ENCODE measurements at regions of chr6 and their contacts with region 1.

Region 1: DNA sequence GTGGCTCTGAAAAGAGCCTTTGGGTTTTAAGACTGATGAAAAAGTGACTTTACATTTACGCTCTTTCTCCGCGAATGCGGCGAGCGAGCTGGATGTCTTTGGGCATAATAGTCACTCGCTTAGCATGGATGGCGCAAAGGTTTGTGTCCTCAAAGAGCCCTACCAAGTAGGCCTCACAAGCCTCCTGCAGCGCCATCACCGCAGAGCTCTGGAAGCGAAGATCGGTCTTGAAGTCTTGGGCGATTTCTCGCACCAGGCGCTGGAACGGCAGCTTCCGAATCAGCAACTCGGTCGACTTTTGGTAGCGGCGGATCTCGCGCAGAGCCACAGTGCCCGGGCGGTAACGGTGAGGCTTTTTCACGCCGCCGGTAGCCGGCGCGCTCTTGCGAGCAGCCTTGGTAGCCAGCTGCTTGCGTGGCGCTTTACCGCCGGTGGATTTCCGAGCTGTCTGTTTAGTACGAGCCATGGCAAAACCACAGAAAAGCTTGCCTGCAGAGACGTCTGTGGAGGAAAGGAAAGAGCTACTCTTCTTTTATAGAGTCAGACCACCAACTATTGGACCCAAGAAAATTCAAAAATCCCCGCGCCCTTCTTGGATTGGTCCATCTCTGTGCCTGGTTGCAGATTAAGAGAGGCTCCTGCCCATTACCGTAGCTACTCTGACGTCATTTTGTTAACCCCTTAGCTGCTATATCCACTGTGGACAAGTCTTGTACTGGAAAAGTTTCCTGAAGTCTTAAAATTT is 55.5 kb upstream of the HFE start:
- DNase-seq: peak; percentile 35 to 91
- ATAC-seq: peak; percentile 82 to 89 (median 87)
- H3K4me3 ChIP-seq: peak overlapping the region in 9 of 10 donors; percentile 36 to 69 (median 63)
- H3K27ac ChIP-seq: peak overlapping the region in 7 of 10 donors; percentile 29 to 91 (median 84)
- H3K4me1 ChIP-seq: peaks cover 4 to 55% (median 17%) of the 10 kb centered on the region in 9 donors
- H3K27me3 ChIP-seq: no peaks in the 10 kb centered on the region
- CTCF ChIP-seq: peak in 4 of 9 donors; percentile 27 to 42 (median 34)

Region 2: DNA sequence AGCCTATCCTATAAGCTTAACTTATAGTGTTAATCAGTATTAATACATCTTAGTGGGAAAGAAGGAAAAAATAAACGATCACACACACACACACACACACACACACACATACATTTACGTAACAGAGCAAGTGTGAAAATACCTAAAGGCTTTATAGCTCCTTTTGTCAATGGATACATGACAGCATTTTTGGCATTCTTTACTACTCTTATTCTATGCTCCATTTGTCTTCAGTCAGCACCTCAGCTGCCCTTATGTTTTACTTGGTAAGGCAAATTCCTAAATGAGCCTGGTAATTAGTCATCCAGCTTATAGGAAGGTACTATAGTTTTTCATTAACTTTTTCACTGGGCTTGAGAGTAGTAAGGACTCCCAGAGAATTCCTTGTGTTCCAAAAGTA is 132.6 kb before region 1 on chr6:
- intact Hi-C with region 1: no loop called
- DNase-seq: no peak
- ATAC-seq: no peak
- H3K4me3 ChIP-seq: no peak overlapping the region
- H3K27ac ChIP-seq: no peak overlapping the region
- H3K4me1 ChIP-seq: no peaks in the 10 kb centered on the region
- H3K27me3 ChIP-seq: peaks cover 0 to 5% (median 0%) of the 10 kb centered on the region in 7 donors
- CTCF ChIP-seq: no peak

Region 3: DNA sequence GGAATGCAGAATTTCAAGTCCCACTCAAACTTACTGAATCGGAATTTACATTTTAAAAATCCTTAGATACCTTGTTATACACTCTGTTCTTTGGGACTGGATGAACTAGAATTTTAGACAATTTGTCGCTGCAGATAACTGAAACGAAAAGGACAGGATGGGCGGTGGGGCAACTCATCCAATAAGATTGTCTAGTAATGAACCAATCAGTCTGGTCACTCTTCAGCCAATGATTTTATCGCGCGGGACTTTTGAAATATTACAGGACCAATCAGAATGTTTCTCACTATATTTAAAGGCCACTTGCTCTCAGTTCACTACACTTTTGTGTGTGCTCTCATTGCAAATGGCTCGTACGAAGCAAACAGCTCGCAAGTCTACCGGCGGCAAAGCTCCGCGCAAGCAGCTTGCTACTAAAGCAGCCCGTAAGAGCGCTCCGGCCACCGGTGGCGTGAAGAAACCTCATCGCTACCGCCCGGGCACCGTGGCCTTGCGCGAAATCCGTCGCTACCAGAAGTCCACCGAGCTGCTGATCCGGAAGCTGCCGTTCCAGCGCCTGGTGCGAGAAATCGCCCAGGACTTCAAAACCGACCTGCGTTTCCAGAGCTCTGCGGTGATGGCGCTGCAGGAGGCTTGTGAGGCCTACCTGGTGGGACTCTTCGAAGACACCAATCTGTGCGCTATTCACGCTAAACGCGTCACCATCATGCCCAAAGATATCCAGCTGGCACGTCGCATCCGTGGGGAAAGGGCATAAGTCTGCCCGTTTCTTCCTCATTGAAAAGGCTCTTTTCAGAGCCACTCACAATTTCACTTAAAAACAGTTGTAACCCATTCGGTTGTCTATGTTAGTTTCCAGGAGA is 13.5 kb after region 1 on chr6:
- intact Hi-C with region 1: loop called in 1 of 10 experiments (anchors 1 kb)
- DNase-seq: peak; percentile 31 to 94
- ATAC-seq: peak; percentile 66 to 89 (median 81)
- H3K4me3 ChIP-seq: peak overlapping the region; percentile 7 to 67 (median 60)
- H3K27ac ChIP-seq: peak overlapping the region; percentile 84 to 95 (median 90)
- H3K4me1 ChIP-seq: peaks cover 4 to 27% (median 14%) of the 10 kb centered on the region in 9 donors
- H3K27me3 ChIP-seq: no peaks in the 10 kb centered on the region
- CTCF ChIP-seq: peak in 1 of 9 donors; percentile 8

Region 4: DNA sequence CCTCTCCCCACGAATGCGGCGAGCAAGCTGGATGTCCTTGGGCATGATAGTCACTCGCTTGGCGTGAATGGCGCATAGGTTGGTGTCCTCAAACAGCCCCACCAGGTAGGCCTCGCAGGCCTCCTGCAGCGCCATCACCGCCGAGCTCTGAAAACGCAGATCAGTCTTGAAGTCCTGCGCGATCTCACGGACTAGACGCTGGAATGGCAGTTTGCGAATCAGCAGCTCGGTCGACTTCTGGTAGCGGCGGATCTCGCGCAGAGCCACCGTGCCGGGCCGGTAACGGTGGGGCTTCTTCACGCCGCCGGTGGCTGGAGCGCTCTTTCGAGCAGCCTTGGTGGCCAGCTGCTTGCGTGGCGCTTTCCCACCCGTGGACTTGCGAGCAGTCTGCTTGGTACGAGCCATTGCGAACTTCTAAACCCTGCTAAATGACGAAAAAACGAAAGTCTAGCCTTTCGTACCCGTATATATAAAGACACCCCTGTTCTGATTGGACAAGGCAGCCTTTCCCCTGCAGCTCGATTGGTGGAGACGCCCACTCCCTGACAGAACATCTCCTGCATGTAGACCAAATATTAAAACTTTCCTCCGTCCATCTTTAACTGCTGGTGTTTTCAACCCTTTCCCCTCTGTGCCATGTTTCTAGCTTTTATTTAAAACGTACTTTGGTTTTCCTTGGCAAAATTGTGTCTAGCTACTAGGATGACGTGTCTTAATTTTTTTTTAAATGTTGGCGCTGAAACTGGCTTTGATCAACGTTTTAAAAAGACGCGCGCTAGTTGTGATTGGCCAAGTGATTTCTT is 165.3 kb after region 1 on chr6:
- intact Hi-C with region 1: loop called in 3 of 10 experiments (anchors 5 to 10 kb)
- DNase-seq: peak; percentile 51 to 83
- ATAC-seq: peak; percentile 52 to 68 (median 62)
- H3K4me3 ChIP-seq: peak overlapping the region; percentile 37 to 75 (median 65)
- H3K27ac ChIP-seq: peak overlapping the region in 9 of 10 donors; percentile 57 to 90 (median 81)
- H3K4me1 ChIP-seq: peaks cover 0 to 52% (median 28%) of the 10 kb centered on the region in 9 donors
- H3K27me3 ChIP-seq: peaks cover 0 to 40% (median 0%) of the 10 kb centered on the region in 7 donors
- CTCF ChIP-seq: peak in 1 of 9 donors; percentile 0

Region 5: GRCh38 chr6:27146706-27147505 is 1115.1 kb after region 1 on chr6:
- intact Hi-C with region 1: loop called in 3 of 10 experiments (anchors 10 kb)
- DNase-seq: peak; percentile 62 to 86
- ATAC-seq: peak; percentile 92 to 98 (median 96)
- H3K4me3 ChIP-seq: peak overlapping the region; percentile 45 to 79 (median 66)
- H3K27ac ChIP-seq: peak overlapping the region; percentile 81 to 93 (median 89)
- H3K4me1 ChIP-seq: peaks cover 0 to 33% (median 15%) of the 10 kb centered on the region in 9 donors
- H3K27me3 ChIP-seq: no peaks in the 10 kb centered on the region
- CTCF ChIP-seq: no peak